Heart right ventricle (tissue), 16 donors: ENCODE measurements at regions of chr3 and their contacts with region 1.

Region 1: GRCh38 chr3:46931631-46932331 is 44.8 kb downstream of the CCDC12 start:
- DNase-seq: peak in 1 of 2 donors; percentile 61
- ATAC-seq: peak in 1 of 8 donors; percentile 10
- H3K4me3 ChIP-seq: no peak overlapping the region
- H3K27ac ChIP-seq: peak overlapping the region; percentile 51 to 90 (median 80)
- H3K4me1 ChIP-seq: peaks cover 54 to 100% (median 99%) of the 10 kb centered on the region in 9 donors
- H3K27me3 ChIP-seq: no peaks in the 10 kb centered on the region
- CTCF ChIP-seq: no peak

Region 2: DNA sequence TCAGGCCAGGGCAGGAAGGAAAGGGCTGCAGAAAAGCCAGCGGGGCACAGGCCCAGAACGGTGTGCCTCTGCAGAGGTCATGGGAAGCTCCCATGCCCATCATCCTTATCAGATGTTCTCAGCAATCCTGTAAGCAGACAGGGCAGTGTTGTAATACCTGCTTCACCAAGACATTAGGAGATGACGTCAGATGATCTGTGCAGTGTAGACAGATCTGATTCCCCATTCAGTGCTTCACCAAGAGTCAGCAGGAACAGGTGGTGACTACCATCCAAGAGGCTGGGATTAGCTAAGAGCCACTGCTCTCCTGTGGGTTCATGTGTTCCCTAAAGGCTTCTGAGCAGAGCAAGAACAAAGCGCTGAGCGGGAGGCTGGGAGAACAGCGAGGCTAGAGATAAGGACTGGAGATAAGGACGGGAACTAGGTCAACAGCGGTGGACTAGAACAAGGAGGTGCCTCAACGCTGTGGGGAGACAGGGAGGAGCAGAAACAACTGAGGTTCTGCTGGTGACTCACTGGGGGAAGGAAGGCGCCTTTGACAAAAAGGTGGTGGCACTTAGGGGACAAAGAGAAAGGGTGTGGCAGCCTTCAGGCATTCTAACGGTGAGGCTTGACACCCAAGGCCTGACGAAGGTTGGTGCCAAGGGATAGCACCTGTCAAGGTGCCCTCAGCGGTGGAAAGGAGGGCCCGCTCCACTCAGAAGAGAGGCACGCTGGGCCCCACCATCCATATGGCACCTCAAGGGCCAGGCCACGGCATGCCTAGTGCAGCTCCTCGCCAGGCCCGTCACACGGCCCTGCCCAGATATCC is 16.4 kb after region 1 on chr3:
- intact Hi-C with region 1: loop called in 1 of 10 experiments (anchors 2 kb)
- DNase-seq: peak in 1 of 2 donors; percentile 62
- ATAC-seq: peak; percentile 5 to 83 (median 72)
- H3K4me3 ChIP-seq: peak overlapping the region in 2 of 10 donors; percentile 1 to 14
- H3K27ac ChIP-seq: peak overlapping the region; percentile 55 to 92 (median 84)
- H3K4me1 ChIP-seq: peaks cover 41 to 95% (median 89%) of the 10 kb centered on the region in 9 donors
- H3K27me3 ChIP-seq: no peaks in the 10 kb centered on the region
- CTCF ChIP-seq: no peak

Region 3: DNA sequence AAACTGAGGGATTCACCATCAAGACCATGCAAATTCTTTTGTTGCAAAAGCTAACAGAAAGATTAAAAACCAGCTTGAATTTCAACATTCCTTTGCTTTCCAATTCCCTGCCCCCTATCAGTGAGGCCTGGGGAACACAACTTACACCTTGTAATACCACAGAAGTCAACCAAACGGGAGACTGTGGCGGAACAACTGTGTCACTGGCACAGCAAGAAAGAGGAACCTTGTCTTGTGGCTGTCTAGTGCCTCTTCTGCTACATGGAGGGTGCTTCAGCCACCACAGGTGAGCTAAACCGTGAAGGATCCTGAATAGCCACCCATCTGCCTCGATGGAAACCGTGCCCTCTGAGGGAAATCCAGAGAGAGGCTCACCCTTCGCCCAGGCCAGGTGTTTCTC is 33.4 kb after region 1 on chr3:
- intact Hi-C with region 1: loop called in 2 of 10 experiments (anchors 2 to 5 kb)
- DNase-seq: no peak
- ATAC-seq: no peak
- H3K4me3 ChIP-seq: no peak overlapping the region
- H3K27ac ChIP-seq: peak overlapping the region in 1 of 10 donors; percentile 28
- H3K4me1 ChIP-seq: peaks cover 18 to 77% (median 63%) of the 10 kb centered on the region in 9 donors
- H3K27me3 ChIP-seq: no peaks in the 10 kb centered on the region
- CTCF ChIP-seq: no peak

Region 4: DNA sequence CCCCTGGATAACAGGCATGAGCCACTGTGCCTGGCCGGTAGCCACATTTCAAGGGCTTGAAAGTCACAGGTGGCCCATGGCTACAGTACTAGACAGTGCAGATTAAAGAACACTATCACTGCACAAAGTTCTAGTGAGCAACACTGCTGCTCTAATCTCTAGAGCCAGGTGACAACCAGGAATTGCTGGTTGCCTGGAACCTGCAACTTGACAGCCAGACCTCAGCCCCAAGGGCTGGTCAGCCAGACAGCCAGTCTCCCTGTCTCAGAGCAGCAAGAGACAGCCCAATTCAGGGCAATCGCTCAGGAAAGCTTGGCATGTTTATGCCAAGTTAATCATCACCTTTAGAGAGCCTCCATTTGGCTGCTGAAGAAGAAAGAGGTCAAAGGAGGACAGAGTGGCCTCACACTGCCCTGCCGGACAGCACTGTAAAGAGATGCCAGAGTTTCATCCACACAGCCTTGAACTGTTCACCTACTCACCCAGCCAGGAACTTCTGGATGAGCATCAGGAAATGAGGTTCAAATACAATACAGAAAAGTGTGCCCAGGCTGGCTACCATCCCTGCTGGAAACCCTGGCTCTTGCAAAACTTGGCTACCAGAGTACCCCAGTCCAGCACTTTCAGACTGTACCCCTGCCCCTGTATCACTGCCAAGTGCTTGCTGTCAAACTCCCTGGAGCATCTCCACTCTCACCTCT is 38.8 kb after region 1 on chr3:
- intact Hi-C with region 1: loop called in 7 of 10 experiments (anchors 2 to 5 kb)
- DNase-seq: peak in 1 of 2 donors; percentile 56
- ATAC-seq: peak; percentile 63 to 88 (median 85)
- H3K4me3 ChIP-seq: no peak overlapping the region
- H3K27ac ChIP-seq: peak overlapping the region in 9 of 10 donors; percentile 0 to 77 (median 69)
- H3K4me1 ChIP-seq: peaks cover 5 to 96% (median 77%) of the 10 kb centered on the region in 9 donors
- H3K27me3 ChIP-seq: no peaks in the 10 kb centered on the region
- CTCF ChIP-seq: no peak

Region 5: GRCh38 chr3:46976326-46977190 is 44.8 kb after region 1 on chr3 and contains the start of gene CCDC12:
- intact Hi-C with region 1: loop called in 6 of 10 experiments (anchors 2 to 5 kb)
- DNase-seq: peak; percentile 88 to 98
- ATAC-seq: peak; percentile 89 to 95 (median 92)
- H3K4me3 ChIP-seq: peak within 1 kb of the TSS; percentile 47 to 90 (median 80)
- H3K27ac ChIP-seq: peak within 1 kb of the TSS; percentile 69 to 96 (median 90)
- H3K4me1 ChIP-seq: peaks cover 3 to 78% (median 69%) of the 10 kb centered on the region in 9 donors
- H3K27me3 ChIP-seq: no peaks in the 10 kb centered on the region
- CTCF ChIP-seq: peak in 1 of 9 donors; percentile 10
- total RNA-seq, gene CCDC12: 28.8 to 39.9 (median 33.3) TPM